Naive thymus-derived CD4-positive, alpha-beta T cell (primary cell): ENCODE measurements at regions of chr5 and their contacts with region 1.

Region 1: DNA sequence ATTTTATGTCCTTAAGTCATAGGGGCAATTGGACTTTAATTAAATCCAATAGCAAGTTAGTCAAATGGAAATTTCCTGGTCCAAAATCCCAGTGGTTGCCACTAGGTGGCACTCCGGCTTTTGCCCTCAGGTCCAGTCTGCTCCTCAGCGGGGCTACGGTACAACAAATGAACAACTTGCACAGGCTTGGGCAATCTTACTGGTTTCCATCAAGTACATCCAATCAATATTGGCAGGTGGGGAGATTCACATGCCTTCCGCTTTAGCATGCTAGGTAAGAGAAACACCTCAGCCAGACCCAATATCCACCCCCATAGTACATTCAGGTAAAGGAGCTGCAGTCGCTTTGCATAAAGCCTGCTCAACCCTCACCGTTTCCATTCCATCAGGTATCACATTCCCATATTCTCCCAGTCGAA is 6.3 kb upstream of the MXD3 start:
- DNase-seq: peak; percentile 41 to 73 (median 69)
- ATAC-seq: peak; percentile 84
- H3K4me3 ChIP-seq: no peak overlapping the region
- H3K4me3 Mint-ChIP-seq: no peak overlapping the region
- H3K27ac ChIP-seq: no peak overlapping the region
- H3K27ac Mint-ChIP-seq: peak overlapping the region in 2 of 9 donors; percentile 32 to 37
- H3K4me1 ChIP-seq: peaks cover 1% of the 10 kb centered on the region in 2 donors
- H3K4me1 Mint-ChIP-seq: peaks cover 0 to 49% (median 20%) of the 10 kb centered on the region in 7 donors
- H3K27me3 ChIP-seq: no peaks in the 10 kb centered on the region
- H3K27me3 Mint-ChIP-seq: no peaks in the 10 kb centered on the region

Region 2: GRCh38 chr5:176590035-176590717 is 727.8 kb before region 1 on chr5:
- CTCF ChIA-PET with region 1: no interaction called
- POLR2A ChIA-PET with region 1: no interaction called
- intact Hi-C with region 1: no loop called
- DNase-seq: no peak
- ATAC-seq: no peak
- H3K4me3 ChIP-seq: no peak overlapping the region
- H3K4me3 Mint-ChIP-seq: no peak overlapping the region
- H3K27ac ChIP-seq: no peak overlapping the region
- H3K27ac Mint-ChIP-seq: no peak overlapping the region
- H3K4me1 ChIP-seq: no peaks in the 10 kb centered on the region
- H3K4me1 Mint-ChIP-seq: no peaks in the 10 kb centered on the region
- H3K27me3 ChIP-seq: no peaks in the 10 kb centered on the region
- H3K27me3 Mint-ChIP-seq: no peaks in the 10 kb centered on the region

Region 3: DNA sequence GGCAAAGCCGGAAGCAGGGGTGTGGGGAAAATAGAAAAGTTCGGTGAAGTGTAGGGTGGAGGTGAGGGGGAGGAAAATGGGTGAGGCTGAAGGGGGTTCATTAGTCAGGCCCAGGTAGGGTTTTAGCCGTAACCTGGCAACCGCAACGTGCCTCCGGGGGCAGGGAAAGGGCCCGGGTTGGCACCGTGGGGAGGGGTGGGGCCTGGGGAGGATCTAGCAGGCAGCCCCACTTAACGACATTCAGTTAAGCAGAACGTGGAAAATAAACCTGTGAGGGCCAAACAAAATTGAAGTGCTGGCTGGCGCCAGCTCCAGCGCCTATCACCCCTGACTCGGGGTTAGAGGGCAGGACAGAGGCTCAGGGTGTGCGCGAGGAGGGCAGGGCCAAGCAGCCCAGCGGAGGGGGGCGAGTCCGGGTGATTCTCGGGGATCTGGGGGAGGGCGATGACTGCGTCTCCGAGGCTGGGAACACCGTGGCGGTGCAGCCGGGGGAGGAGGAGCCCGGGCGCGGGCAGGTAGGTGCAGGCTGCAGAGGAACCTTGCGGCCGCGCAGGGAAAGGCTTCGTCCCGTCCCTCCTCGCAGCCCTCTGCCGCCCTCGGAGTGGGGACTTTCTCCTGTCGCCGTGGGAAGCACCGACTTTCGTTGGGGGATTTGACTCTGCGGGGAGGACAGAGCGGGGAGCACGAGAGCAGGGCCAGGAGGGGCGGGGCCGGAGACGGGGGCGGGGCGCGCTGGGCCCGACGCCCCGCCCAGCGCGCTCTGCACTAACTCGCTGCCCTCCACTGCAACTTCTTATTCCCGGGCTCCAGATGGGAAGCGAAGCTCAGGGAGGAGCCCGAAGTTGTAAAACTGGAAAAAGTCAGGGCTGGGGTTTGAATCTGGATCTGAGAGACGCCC is 44.9 kb after region 1 on chr5:
- CTCF ChIA-PET with region 1: interaction called, 6 read pairs
- POLR2A ChIA-PET with region 1: no interaction called
- intact Hi-C with region 1: loop called in 1 of 2 experiments (anchors 1 kb)
- DNase-seq: peak; percentile 32 to 79 (median 55)
- ATAC-seq: peak; percentile 80
- H3K4me3 ChIP-seq: peak overlapping the region; percentile 61
- H3K4me3 Mint-ChIP-seq: peak overlapping the region; percentile 83 to 97 (median 90)
- H3K27ac ChIP-seq: peak overlapping the region; percentile 88
- H3K27ac Mint-ChIP-seq: peak overlapping the region; percentile 82 to 94 (median 91)
- H3K4me1 ChIP-seq: peaks cover 53 to 61% of the 10 kb centered on the region in 2 donors
- H3K4me1 Mint-ChIP-seq: peaks cover 42 to 78% (median 64%) of the 10 kb centered on the region in 7 donors
- H3K27me3 ChIP-seq: no peaks in the 10 kb centered on the region
- H3K27me3 Mint-ChIP-seq: no peaks in the 10 kb centered on the region